ENCODE measurements at regions of chr1 and their contacts with region 1.

Region 1: GRCh38 chr1:235843461-235843961 is 23.2 kb downstream of the LYST start:
- DNase-seq: no peak
- H3K4me3 ChIP-seq: no peak overlapping the region
- CTCF ChIP-seq: peak; percentile 53

Region 2: GRCh38 chr1:235831148-235831547 is 12.4 kb before region 1 on chr1:
- CTCF ChIA-PET with region 1: interaction called, 90 read pairs
- POLR2A ChIA-PET with region 1: no interaction called
- DNase-seq: peak; percentile 28
- H3K4me3 ChIP-seq: no peak overlapping the region
- CTCF ChIP-seq: no peak

Region 3: DNA sequence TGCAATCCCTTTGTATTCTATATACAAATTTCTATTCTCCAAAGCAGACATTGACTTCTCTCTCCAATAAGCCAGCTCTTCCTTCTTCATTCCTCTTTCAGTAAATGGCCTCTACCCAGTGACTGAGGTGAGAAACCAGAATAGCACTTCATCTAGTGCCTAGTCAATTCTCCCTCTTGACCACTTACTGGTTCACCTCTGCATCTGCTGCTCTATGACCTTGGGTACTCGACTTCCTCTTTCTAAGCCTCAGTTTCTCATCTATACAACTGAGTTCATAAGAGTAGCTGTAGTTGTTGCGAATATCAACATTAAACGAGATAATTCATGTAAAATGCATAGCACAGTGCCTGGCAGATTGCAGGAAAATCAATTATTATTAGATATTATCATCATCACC is 10.8 kb after region 1 on chr1:
- CTCF ChIA-PET with region 1: interaction called, 13 read pairs
- POLR2A ChIA-PET with region 1: no interaction called
- DNase-seq: no peak
- H3K4me3 ChIP-seq: no peak overlapping the region
- CTCF ChIP-seq: no peak

Region 4: GRCh38 chr1:235932090-235932510 is 88.6 kb after region 1 on chr1:
- CTCF ChIA-PET with region 1: no interaction called
- POLR2A ChIA-PET with region 1: no interaction called
- DNase-seq: no peak
- H3K4me3 ChIP-seq: no peak overlapping the region
- CTCF ChIP-seq: no peak

Region 5: DNA sequence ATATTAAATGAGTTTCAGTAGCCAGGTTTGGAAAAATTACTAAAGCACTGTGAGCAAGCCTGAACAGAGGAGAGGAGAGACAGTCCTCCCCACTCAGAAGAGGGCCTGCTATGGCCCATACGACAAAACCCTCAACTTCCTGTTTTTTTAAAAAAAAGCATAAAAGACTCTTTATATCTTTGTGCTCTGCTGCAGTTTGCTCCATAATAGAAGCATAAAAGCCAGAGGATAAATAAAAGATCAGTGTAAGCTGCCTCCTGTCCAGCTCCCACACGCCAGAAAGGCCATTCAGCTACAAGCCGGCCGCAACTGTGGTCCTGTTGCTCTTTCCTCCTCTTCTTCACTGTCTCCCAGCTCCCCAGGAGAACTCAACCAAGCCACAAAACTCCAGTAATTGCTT is 183.6 kb after region 1 on chr1:
- CTCF ChIA-PET with region 1: no interaction called
- POLR2A ChIA-PET with region 1: no interaction called
- DNase-seq: no peak
- H3K4me3 ChIP-seq: no peak overlapping the region
- CTCF ChIP-seq: no peak

Measured in AG04449 (cell line).